Right lobe of liver (tissue), 6 donors: ENCODE measurements at regions of chr10 and their contacts with region 1.

Region 1: DNA sequence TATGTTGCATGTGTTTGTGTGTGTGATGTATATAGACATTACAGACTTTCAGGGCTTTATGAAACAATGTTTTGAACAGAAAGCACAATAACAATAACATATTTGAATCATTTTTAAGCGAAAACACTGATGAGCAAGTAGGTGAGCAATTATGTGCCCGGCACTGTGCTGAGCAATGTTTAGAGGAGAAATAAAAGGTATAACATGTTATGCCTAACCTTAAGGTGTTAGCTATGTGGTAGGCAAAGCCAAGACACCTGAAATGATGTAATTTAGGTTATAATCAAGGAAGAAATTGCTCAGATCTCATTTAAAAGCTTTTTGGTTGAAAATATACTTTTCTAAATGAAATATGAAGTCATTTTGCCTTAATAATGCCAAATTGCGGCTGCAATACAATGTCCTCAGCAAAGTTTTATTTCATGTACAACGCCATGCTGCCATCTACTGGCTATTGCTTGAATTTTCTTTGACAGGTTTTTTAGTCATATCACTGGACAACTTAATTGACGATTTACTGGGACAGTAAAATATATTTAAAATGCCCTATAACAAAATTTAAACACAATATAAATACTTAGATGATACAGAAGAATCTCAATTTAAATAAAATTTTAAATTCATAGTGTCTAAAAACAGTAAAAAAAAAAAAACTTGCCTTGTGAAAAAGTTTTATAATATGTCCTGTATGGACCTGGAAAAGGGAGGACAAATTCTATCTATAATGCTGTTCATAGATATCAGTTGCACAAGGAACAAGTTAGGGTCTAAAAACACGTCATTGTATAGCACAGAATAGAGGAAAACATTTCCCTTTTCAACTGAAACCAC is 131.1 kb upstream of the CDK1 start:
- DNase-seq: no peak
- ATAC-seq: peak; percentile 66 to 83 (median 82)
- H3K4me3 ChIP-seq: no peak overlapping the region
- H3K27ac ChIP-seq: no peak overlapping the region
- H3K4me1 ChIP-seq: no peaks in the 10 kb centered on the region
- H3K27me3 ChIP-seq: no peaks in the 10 kb centered on the region
- CTCF ChIP-seq: peak; percentile 71 to 89 (median 78)
- POLR2A ChIP-seq: no peak

Region 2: DNA sequence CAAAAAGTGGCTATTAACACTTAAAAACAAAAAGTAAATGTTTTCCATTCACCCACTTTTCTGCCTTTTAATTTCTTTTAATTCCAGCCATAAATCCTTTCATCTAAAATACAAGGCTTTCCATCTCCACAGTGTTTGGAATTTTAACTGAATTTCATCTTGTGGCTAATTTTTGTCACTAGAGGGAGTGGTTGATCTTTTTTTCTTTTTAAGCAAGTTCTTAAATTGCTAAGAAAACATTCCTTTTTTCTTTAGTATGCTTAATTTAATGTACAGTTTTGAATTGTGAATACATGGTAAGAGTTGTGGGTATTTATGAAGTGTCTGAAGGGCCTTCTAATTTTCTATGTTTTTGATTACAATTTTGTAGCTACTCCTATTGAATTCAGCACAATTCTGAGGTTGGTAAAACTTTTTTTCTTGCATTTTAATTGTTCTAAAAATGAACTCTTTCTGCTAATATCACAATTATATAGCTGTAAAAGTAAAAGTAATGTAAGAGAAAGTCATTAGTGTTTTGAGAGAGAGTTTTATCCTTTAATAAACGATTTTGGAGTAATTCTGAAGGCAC is 202.6 kb before region 1 on chr10:
- intact Hi-C with region 1: loop called (anchors 5 to 10 kb)
- DNase-seq: no peak
- ATAC-seq: no peak
- H3K4me3 ChIP-seq: no peak overlapping the region
- H3K27ac ChIP-seq: no peak overlapping the region
- H3K4me1 ChIP-seq: no peaks in the 10 kb centered on the region
- H3K27me3 ChIP-seq: no peaks in the 10 kb centered on the region
- CTCF ChIP-seq: peak; percentile 51 to 58 (median 56)
- POLR2A ChIP-seq: no peak

Region 3: GRCh38 chr10:60549686-60550085 is 97.5 kb before region 1 on chr10:
- intact Hi-C with region 1: loop called in 1 of 2 experiments (anchors 10 kb)
- DNase-seq: no peak
- ATAC-seq: peak; percentile 72 to 82 (median 78)
- H3K4me3 ChIP-seq: no peak overlapping the region
- H3K27ac ChIP-seq: no peak overlapping the region
- H3K4me1 ChIP-seq: no peaks in the 10 kb centered on the region
- H3K27me3 ChIP-seq: no peaks in the 10 kb centered on the region
- CTCF ChIP-seq: peak; percentile 48 to 56 (median 52)
- POLR2A ChIP-seq: no peak

Region 4: GRCh38 chr10:60863796-60864195 is 216.6 kb after region 1 on chr10:
- intact Hi-C with region 1: no loop called
- DNase-seq: no peak
- ATAC-seq: no peak
- H3K4me3 ChIP-seq: no peak overlapping the region
- H3K27ac ChIP-seq: no peak overlapping the region
- H3K4me1 ChIP-seq: no peaks in the 10 kb centered on the region
- H3K27me3 ChIP-seq: no peaks in the 10 kb centered on the region
- CTCF ChIP-seq: no peak
- POLR2A ChIP-seq: no peak